PC-3 (cell line): ENCODE measurements at regions of chr14 and their contacts with region 1.

Region 1: DNA sequence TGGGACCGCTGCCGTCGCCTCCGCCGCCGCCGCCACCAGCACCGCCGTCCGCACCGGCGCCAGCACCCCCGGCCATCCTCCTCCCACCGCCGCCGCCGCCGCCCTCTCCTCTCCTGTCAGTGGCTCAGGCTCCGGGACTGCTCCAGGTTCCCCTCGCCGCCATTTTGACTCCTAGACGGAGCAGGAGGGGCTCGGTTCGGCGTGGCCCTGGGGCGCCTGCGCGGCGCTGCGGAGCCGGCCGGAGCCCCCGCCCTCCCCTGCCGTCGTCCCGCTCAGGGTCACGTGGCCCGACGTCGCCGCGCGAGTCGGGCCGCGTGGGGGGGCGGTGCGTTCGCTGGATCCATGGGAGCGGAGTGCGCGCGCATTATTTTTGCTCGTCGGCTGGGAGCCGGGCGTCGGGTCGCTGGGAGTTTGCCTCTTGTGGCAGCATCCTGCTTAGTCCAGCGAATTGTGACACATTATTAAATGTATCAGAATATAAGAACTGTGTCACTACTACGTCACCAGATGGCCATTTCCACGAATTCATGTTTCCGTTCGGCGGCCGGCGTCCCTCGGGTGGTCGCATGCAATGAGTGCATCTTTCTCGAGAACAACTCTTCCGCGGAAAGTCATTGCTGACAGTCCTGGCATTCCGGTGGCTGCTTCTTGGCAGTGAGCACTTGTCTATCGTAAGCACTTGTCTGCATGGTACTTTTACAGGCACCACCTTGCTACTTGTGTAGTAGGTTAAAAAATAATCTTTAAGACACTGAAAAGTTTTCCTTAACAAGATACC is at the start of gene BTBD7:
- DNase-seq: peak; percentile 97
- ATAC-seq: peak; percentile 82
- H3K4me3 ChIP-seq: peak within 1 kb of the TSS; percentile 97
- H3K27ac ChIP-seq: peak within 1 kb of the TSS; percentile 94
- H3K4me1 ChIP-seq: peaks cover 34% of the 10 kb centered on the region
- H3K27me3 ChIP-seq: no peaks in the 10 kb centered on the region
- CTCF ChIP-seq: peak; percentile 30; the same call in 1 of the 2 replicates
- total RNA-seq, gene BTBD7: 23.2 and 29.8 TPM in 2 replicates

Region 2: DNA sequence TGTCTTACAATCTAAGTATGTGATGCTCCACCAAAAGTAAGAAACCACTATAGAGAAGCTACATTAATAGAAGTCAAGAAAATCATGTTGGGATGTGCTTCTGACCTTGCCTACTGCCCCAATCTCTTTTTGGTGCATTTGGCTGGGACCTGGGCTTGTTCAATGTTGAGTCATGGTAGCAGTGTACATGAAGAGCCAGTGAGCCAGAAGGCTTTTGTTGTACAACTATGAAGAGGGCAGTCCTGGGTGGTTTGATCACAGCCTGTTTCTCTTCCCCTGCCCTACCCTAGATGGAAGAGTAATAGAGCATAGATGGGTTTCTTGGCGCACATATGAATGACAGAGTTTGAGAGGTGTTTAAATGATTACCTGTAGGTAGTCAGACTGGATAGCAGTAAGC is 69.6 kb before region 1 on chr14:
- CTCF ChIA-PET with region 1: no interaction called
- POLR2A ChIA-PET with region 1: interaction called, 8 read pairs
- intact Hi-C with region 1: loop called (anchors 1 kb)
- DNase-seq: peak; percentile 41
- ATAC-seq: no peak
- H3K4me3 ChIP-seq: no peak overlapping the region
- H3K27ac ChIP-seq: peak overlapping the region; percentile 38
- H3K4me1 ChIP-seq: peaks cover 35% of the 10 kb centered on the region
- H3K27me3 ChIP-seq: no peaks in the 10 kb centered on the region
- CTCF ChIP-seq: no peak

Region 3: GRCh38 chr14:93309427-93309966 is 23.5 kb before region 1 on chr14:
- CTCF ChIA-PET with region 1: no interaction called
- POLR2A ChIA-PET with region 1: no interaction called
- intact Hi-C with region 1: loop called (anchors 2 kb)
- DNase-seq: peak; percentile 76
- ATAC-seq: peak; percentile 89
- H3K4me3 ChIP-seq: no peak overlapping the region
- H3K27ac ChIP-seq: peak overlapping the region; percentile 82
- H3K4me1 ChIP-seq: peaks cover 30% of the 10 kb centered on the region
- H3K27me3 ChIP-seq: no peaks in the 10 kb centered on the region
- CTCF ChIP-seq: no peak